Activated B cell treated with CpG ODN at 0.5 μM for 24 hours (primary cell): ENCODE measurements at regions of chr5 and their contacts with region 1.

Region 1: DNA sequence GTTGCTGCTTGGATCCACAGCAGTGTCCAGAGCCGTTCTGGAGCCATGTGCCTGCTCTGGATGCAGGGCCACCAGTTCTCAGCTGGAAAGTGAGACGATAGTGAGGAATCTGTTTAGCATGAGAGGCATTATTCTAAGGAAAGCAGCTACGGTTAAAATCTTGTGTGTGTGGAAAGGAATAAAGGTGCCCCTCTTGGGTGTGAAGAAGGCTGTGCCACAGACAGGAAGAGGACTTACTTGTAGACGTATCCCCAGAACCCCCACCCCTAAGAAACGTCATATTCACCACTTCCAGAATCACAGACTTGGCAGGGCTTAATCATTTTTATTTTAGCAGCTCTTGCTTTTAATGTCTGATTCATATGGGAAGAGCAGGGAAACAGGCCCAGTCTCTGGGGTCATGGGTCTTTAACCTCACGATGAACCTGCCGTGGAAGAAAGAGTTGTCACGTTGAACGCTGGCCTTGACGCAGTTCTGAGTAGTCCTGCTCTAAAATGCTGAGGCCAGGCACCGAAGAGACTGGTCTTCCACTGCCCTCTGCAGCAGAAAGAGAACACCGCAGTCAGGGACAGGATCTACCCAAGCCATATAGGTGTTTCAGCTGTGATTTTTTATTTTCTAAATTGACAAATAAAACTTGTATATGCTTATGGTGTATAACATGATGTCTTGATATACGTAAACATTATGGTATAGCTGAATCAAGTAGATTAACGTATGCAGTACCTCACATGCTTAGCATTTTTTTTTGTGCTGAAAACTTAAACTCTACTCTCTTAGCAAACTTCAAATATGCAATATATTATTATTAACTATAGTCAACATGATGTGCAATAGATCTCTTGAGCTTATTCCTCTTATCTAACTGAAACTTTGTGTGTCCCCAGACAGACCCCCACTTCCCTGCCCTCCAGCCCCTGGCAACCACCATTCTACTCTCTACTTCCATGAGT is 38.8 kb downstream of the CARTPT start:
- DNase-seq: no peak
- ATAC-seq: peak; percentile 67
- H3K4me3 Mint-ChIP-seq: peak overlapping the region; percentile 21
- H3K27ac Mint-ChIP-seq: no peak overlapping the region
- H3K4me1 Mint-ChIP-seq: peaks cover 4% of the 10 kb centered on the region
- H3K27me3 Mint-ChIP-seq: peaks cover 3% of the 10 kb centered on the region
- CTCF ChIP-seq: no peak

Region 2: GRCh38 chr5:71658916-71659662 is 98.8 kb before region 1 on chr5:
- CTCF ChIA-PET with region 1: no interaction called
- POLR2A ChIA-PET with region 1: no interaction called
- intact Hi-C with region 1: loop called (anchors 5 kb)
- DNase-seq: no peak
- ATAC-seq: no peak
- H3K4me3 Mint-ChIP-seq: no peak overlapping the region
- H3K27ac Mint-ChIP-seq: no peak overlapping the region
- H3K4me1 Mint-ChIP-seq: no peaks in the 10 kb centered on the region
- H3K27me3 Mint-ChIP-seq: no peaks in the 10 kb centered on the region
- CTCF ChIP-seq: no peak